ENCODE measurements at regions of chr14 and their contacts with region 1.

Region 1: DNA sequence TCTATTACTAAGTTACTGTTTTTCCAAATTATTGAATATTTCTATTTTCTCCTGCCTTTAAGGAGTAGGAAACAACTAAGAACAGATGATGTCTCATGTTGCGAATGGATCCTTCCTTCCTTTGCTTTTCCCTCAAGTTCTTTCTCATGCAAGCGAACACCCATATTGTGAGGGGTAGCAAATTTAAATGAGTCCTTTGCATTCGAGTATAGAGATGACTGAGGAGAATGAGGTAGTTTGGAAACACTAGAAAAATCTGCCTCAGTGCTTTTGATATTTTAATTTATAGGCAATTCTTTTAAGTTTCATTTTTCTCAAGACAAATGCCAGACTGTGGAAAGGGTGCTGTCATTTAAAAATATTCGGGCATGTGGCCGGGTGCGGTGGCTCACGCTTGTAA is 56.1 kb downstream of the TRAF3 start:
- DNase-seq: no peak

Region 2: GRCh38 chr14:102738756-102739494 is 94.4 kb before region 1 on chr14:
- intact Hi-C with region 1: no loop called
- DNase-seq: peak; percentile 36

Region 3: GRCh38 chr14:102774391-102775153 is 58.8 kb before region 1 on chr14:
- intact Hi-C with region 1: loop called in 1 of 2 experiments (anchors 2 kb)
- DNase-seq: no peak

Region 4: DNA sequence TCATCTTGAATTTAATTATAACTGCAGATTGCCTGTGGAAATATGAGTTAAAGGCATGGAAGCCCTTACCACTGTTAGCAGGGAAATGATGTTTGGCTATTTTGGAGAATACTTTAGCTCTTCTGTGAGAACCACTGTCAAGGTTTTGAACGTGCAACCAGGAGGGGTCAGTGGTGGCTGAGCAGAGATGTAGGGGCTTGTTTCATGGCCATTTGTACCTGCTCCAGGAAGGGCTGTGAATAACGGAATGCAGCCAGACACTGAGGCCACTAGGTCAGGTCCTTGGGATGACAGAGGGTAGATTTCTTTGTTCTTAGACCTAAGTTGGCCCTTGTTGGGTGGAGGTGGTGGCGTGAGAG is 47.8 kb before region 1 on chr14:
- intact Hi-C with region 1: no loop called
- DNase-seq: no peak